ENCODE measurements at regions of chr18 and their contacts with region 1.

Region 1: GRCh38 chr18:22846088-22846683 is 86.9 kb upstream of the RBBP8 start:
- DNase-seq: peak; percentile 54
- H3K4me3 Mint-ChIP-seq: no peak overlapping the region
- H3K27ac Mint-ChIP-seq: peak overlapping the region; percentile 71
- H3K4me1 Mint-ChIP-seq: peaks cover 62% of the 10 kb centered on the region
- H3K27me3 Mint-ChIP-seq: no peaks in the 10 kb centered on the region
- CTCF ChIP-seq: peak; percentile 29

Region 2: DNA sequence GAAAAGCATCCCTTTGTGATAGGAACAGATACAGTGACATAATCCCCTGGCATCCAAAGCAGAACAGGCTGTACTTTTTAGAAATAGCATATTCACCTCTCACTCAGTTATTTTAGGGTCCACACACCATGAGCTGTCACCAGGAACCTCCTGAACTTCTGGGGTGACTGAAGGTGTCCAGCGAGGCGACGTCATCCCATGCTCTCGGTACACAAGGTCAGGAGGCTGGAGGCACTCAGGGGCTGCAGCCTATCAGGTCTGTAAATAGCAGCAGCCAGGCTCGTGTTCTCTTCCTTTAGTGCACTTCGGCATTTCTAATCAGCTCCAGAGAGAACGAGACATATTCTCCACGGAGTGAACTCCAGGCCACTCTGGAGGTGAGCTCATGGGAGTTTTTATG is 578.5 kb before region 1 on chr18:
- CTCF ChIA-PET with region 1: no interaction called
- POLR2A ChIA-PET with region 1: no interaction called
- intact Hi-C with region 1: no loop called
- DNase-seq: no peak
- H3K4me3 Mint-ChIP-seq: no peak overlapping the region
- H3K27ac Mint-ChIP-seq: no peak overlapping the region
- H3K4me1 Mint-ChIP-seq: no peaks in the 10 kb centered on the region
- H3K27me3 Mint-ChIP-seq: peaks cover 14% of the 10 kb centered on the region
- CTCF ChIP-seq: no peak

Region 3: GRCh38 chr18:22831441-22831904 is 14.7 kb before region 1 on chr18:
- CTCF ChIA-PET with region 1: interaction called, 7 read pairs
- POLR2A ChIA-PET with region 1: interaction called, 55 read pairs
- intact Hi-C with region 1: no loop called
- DNase-seq: peak; percentile 97
- H3K4me3 Mint-ChIP-seq: no peak overlapping the region
- H3K27ac Mint-ChIP-seq: no peak overlapping the region
- H3K4me1 Mint-ChIP-seq: peaks cover 30% of the 10 kb centered on the region
- H3K27me3 Mint-ChIP-seq: no peaks in the 10 kb centered on the region
- CTCF ChIP-seq: no peak

Region 4: GRCh38 chr18:22856870-22857269 is 10.7 kb after region 1 on chr18:
- CTCF ChIA-PET with region 1: interaction called, 10 read pairs
- POLR2A ChIA-PET with region 1: interaction called, 61 read pairs
- intact Hi-C with region 1: no loop called
- DNase-seq: peak; percentile 67
- H3K4me3 Mint-ChIP-seq: no peak overlapping the region
- H3K27ac Mint-ChIP-seq: peak overlapping the region; percentile 79
- H3K4me1 Mint-ChIP-seq: peaks cover 10% of the 10 kb centered on the region
- H3K27me3 Mint-ChIP-seq: no peaks in the 10 kb centered on the region
- CTCF ChIP-seq: no peak

Region 5: GRCh38 chr18:22879293-22879692 is 33.1 kb after region 1 on chr18:
- CTCF ChIA-PET with region 1: no interaction called
- POLR2A ChIA-PET with region 1: no interaction called
- intact Hi-C with region 1: no loop called
- DNase-seq: no peak
- H3K4me3 Mint-ChIP-seq: no peak overlapping the region
- H3K27ac Mint-ChIP-seq: no peak overlapping the region
- H3K4me1 Mint-ChIP-seq: no peaks in the 10 kb centered on the region
- H3K27me3 Mint-ChIP-seq: no peaks in the 10 kb centered on the region
- CTCF ChIP-seq: no peak

Region 6: GRCh38 chr18:22977847-22978701 is 131.9 kb after region 1 on chr18:
- CTCF ChIA-PET with region 1: interaction called, 18 read pairs
- POLR2A ChIA-PET with region 1: interaction called, 50 read pairs
- intact Hi-C with region 1: loop called (anchors 1 kb)
- DNase-seq: peak; percentile 86
- H3K4me3 Mint-ChIP-seq: peak overlapping the region; percentile 68
- H3K27ac Mint-ChIP-seq: peak overlapping the region; percentile 98
- H3K4me1 Mint-ChIP-seq: peaks cover 24% of the 10 kb centered on the region
- H3K27me3 Mint-ChIP-seq: no peaks in the 10 kb centered on the region
- CTCF ChIP-seq: no peak

Region 7: DNA sequence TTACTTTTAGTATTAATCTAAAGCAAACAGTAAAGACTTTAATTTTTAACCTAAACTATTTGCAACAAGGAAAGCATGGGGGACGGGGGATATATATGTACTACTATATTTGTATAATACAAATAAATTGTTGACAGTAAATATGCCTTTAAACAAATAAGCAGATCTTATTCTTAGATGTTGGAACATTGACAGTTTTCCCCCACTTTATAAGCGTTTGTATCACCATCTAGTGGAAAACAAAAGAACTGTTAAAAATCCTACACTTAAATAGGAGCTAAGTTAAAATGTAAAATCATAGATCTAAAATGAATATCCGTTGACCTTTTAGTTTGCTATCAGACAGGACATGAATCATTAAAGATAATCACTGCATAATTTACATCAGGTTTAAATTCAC is 137.0 kb after region 1 on chr18:
- CTCF ChIA-PET with region 1: interaction called, 18 read pairs
- POLR2A ChIA-PET with region 1: interaction called, 50 read pairs
- intact Hi-C with region 1: loop called (anchors 1 kb)
- DNase-seq: peak; percentile 48
- H3K4me3 Mint-ChIP-seq: no peak overlapping the region
- H3K27ac Mint-ChIP-seq: no peak overlapping the region
- H3K4me1 Mint-ChIP-seq: peaks cover 13% of the 10 kb centered on the region
- H3K27me3 Mint-ChIP-seq: no peaks in the 10 kb centered on the region
- CTCF ChIP-seq: peak; percentile 40

Region 8: GRCh38 chr18:23049698-23050373 is 203.7 kb after region 1 on chr18:
- CTCF ChIA-PET with region 1: no interaction called
- POLR2A ChIA-PET with region 1: no interaction called
- intact Hi-C with region 1: no loop called
- DNase-seq: no peak
- H3K4me3 Mint-ChIP-seq: no peak overlapping the region
- H3K27ac Mint-ChIP-seq: no peak overlapping the region
- H3K4me1 Mint-ChIP-seq: no peaks in the 10 kb centered on the region
- H3K27me3 Mint-ChIP-seq: peaks cover 19% of the 10 kb centered on the region
- CTCF ChIP-seq: no peak

Measured in MCF 10A (cell line).